ENCODE measurements at regions of chr3 and their contacts with region 1.

Region 1: GRCh38 chr3:63538919-63539318 is 113.6 kb upstream of the SNTN start:
- DNase-seq: no peak
- ATAC-seq: no peak
- H3K4me3 ChIP-seq: no peak overlapping the region
- H3K27ac ChIP-seq: no peak overlapping the region
- H3K4me1 ChIP-seq: no peaks in the 10 kb centered on the region
- H3K27me3 ChIP-seq: no peaks in the 10 kb centered on the region
- CTCF ChIP-seq: no peak
- POLR2A ChIP-seq: no peak

Region 2: GRCh38 chr3:62982795-62983455 is 556.0 kb before region 1 on chr3:
- intact Hi-C with region 1: no loop called
- DNase-seq: no peak
- ATAC-seq: no peak
- H3K4me3 ChIP-seq: no peak overlapping the region
- H3K27ac ChIP-seq: no peak overlapping the region
- H3K4me1 ChIP-seq: no peaks in the 10 kb centered on the region
- H3K27me3 ChIP-seq: peaks cover 0 to 4% (median 0%) of the 10 kb centered on the region in 9 donors
- CTCF ChIP-seq: no peak
- POLR2A ChIP-seq: no peak

Region 3: DNA sequence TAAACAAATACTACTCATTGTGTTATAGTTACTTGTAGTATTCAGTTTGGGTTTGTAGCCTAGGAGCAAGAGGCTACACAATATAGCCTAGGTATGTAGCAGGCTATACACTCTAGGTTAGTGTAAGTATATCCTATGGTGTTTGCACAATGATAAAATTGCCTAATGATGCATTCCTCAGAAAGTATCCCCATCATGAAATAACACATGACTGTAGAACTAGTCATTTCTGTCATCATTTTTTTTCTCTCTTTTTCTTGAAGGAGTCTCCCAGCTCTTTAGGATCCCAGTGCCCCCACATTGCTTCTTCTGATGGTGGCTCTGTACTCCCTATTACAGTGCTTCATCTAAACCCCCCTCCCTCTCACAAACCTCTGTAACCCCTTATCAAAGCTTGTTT is 506.0 kb before region 1 on chr3:
- intact Hi-C with region 1: no loop called
- DNase-seq: no peak
- ATAC-seq: no peak
- H3K4me3 ChIP-seq: no peak overlapping the region
- H3K27ac ChIP-seq: no peak overlapping the region
- H3K4me1 ChIP-seq: peaks cover 0 to 3% (median 0%) of the 10 kb centered on the region in 12 donors
- H3K27me3 ChIP-seq: no peaks in the 10 kb centered on the region
- CTCF ChIP-seq: no peak
- POLR2A ChIP-seq: no peak

Region 4: GRCh38 chr3:63349583-63350521 is 189.1 kb before region 1 on chr3:
- intact Hi-C with region 1: no loop called
- DNase-seq: peak in 2 of 5 donors; percentile 25 to 29
- ATAC-seq: peak in 2 of 4 donors; percentile 51 to 69
- H3K4me3 ChIP-seq: no peak overlapping the region
- H3K27ac ChIP-seq: no peak overlapping the region
- H3K4me1 ChIP-seq: no peaks in the 10 kb centered on the region
- H3K27me3 ChIP-seq: peaks cover 0 to 19% (median 3%) of the 10 kb centered on the region in 9 donors
- CTCF ChIP-seq: peak; percentile 49 to 78 (median 64)
- POLR2A ChIP-seq: no peak

Region 5: GRCh38 chr3:63386556-63386955 is 152.4 kb before region 1 on chr3:
- intact Hi-C with region 1: no loop called
- DNase-seq: peak in 1 of 5 donors; percentile 23
- ATAC-seq: no peak
- H3K4me3 ChIP-seq: no peak overlapping the region
- H3K27ac ChIP-seq: no peak overlapping the region
- H3K4me1 ChIP-seq: no peaks in the 10 kb centered on the region
- H3K27me3 ChIP-seq: peaks cover 0 to 9% (median 0%) of the 10 kb centered on the region in 9 donors
- CTCF ChIP-seq: no peak
- POLR2A ChIP-seq: no peak

Region 6: GRCh38 chr3:63556401-63556800 is 17.5 kb after region 1 on chr3:
- intact Hi-C with region 1: loop called in 1 of 10 experiments (anchors 1 kb)
- DNase-seq: no peak
- ATAC-seq: no peak
- H3K4me3 ChIP-seq: no peak overlapping the region
- H3K27ac ChIP-seq: no peak overlapping the region
- H3K4me1 ChIP-seq: no peaks in the 10 kb centered on the region
- H3K27me3 ChIP-seq: no peaks in the 10 kb centered on the region
- CTCF ChIP-seq: no peak
- POLR2A ChIP-seq: no peak

Measured in heart left ventricle (tissue), 16 donors.